GM12878 (cell line): ENCODE measurements at regions of chr9 and their contacts with region 1.

Region 1: DNA sequence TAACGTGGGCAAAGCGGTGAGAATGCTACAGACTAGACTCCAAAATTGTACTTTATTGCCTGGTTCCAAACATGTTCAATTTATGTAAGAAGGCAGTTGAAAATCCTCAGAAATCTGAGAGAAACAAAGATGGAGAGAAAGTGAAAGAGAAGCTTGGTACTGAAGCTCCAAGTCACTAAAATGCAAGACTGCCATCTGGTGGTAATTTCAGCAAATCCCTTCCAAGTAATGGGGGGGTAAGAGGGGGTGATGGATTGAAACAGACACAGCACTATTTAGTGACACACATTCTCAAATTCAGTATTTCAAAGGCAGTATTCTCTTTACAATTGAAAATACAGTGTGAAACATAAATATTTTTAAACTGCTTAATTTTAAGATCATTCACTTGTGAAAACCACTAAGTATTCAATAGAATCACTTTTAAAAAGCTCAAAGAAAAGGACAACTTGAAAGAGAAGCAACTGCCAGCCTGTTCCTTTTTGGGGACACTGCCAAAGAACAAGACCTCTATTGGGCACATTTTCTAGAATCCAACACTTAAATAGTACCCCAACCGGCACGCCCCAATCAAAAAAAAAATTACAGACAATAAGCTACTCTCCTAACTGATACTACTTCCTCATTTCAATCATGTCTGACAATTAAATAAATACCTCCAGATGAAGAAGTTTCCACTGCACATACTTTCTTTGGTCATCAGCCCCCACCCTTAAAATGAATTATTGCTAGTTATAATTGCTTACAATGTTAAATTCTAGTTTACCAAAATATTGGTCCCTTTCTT is 131.5 kb downstream of the AGTPBP1 start:
- DNase-seq: peak; percentile 44
- ATAC-seq: peak; percentile 99
- H3K4me3 ChIP-seq: no peak overlapping the region
- H3K27ac ChIP-seq: peak overlapping the region; percentile 48; the same call in 1 of the 2 replicates
- H3K4me1 ChIP-seq: peaks cover 4% of the 10 kb centered on the region; the same call in 1 of the 2 replicates
- H3K27me3 ChIP-seq: no peaks in the 10 kb centered on the region
- CTCF ChIP-seq: peak; percentile 68 to 88 (median 79); a peak in 5 of 6 replicates
- EP300 ChIP-seq: no peak
- POLR2A ChIP-seq: no peak
- RAD21 ChIP-seq: peak; percentile 87

Region 2: DNA sequence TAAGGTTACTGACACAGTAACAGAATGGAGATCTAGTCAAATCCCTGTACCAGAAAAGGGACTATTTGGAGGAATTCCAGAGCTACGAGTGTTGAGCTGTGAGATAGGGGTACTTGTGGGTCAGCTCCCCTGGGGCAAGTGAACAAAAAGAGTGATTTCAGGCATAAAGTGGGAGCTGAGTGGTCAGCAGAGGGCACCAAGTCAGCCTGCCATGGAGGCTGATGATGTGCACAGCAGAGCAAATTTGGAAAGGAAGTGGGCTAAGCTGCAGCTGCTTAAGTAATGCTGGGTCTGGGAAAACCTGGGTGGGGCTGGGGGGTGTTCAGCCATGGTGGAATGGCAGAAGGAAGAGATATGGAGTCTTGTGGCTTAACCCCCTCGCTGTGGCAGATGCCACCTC is 612.8 kb before region 1 on chr9:
- CTCF ChIA-PET with region 1: interaction called, 10 read pairs
- POLR2A ChIA-PET with region 1: no interaction called
- RAD21 ChIA-PET with region 1: interaction called, 4 read pairs
- SMC1A ChIA-PET with region 1: no interaction called
- in situ Hi-C with region 1: no loop called
- intact Hi-C with region 1: no loop called
- DNase-seq: no peak
- ATAC-seq: peak; percentile 49; the same call in 2 of the 3 replicates
- H3K4me3 ChIP-seq: no peak overlapping the region
- H3K27ac ChIP-seq: no peak overlapping the region
- H3K4me1 ChIP-seq: no peaks in the 10 kb centered on the region
- H3K27me3 ChIP-seq: no peaks in the 10 kb centered on the region; a peak in 1 of 4 replicates
- CTCF ChIP-seq: peak in 2 of 3 experiments; percentile 5 to 27; a peak in 3 of 6 replicates
- EP300 ChIP-seq: no peak
- POLR2A ChIP-seq: no peak
- RAD21 ChIP-seq: peak; percentile 41

Region 3: GRCh38 chr9:85258823-85259370 is 351.4 kb before region 1 on chr9:
- CTCF ChIA-PET with region 1: interaction called, 17 read pairs
- POLR2A ChIA-PET with region 1: no interaction called
- RAD21 ChIA-PET with region 1: interaction called, 9 read pairs
- SMC1A ChIA-PET with region 1: interaction called, 4 read pairs
- in situ Hi-C with region 1: no loop called
- intact Hi-C with region 1: loop called (anchors 5 kb)
- DNase-seq: peak; percentile 20
- ATAC-seq: peak; percentile 97
- H3K4me3 ChIP-seq: no peak overlapping the region
- H3K27ac ChIP-seq: no peak overlapping the region
- H3K4me1 ChIP-seq: no peaks in the 10 kb centered on the region
- H3K27me3 ChIP-seq: peaks cover 0 to 3% of the 10 kb centered on the region in 2 experiments; a peak in 1 of 4 replicates
- CTCF ChIP-seq: peak; percentile 69 to 82 (median 72)
- EP300 ChIP-seq: no peak
- POLR2A ChIP-seq: no peak
- RAD21 ChIP-seq: peak; percentile 75

Region 4: GRCh38 chr9:85577353-85577952 is 32.8 kb before region 1 on chr9:
- CTCF ChIA-PET with region 1: interaction called, 10 read pairs
- POLR2A ChIA-PET with region 1: no interaction called
- RAD21 ChIA-PET with region 1: no interaction called
- SMC1A ChIA-PET with region 1: interaction called, 7 read pairs
- in situ Hi-C with region 1: no loop called
- intact Hi-C with region 1: no loop called
- DNase-seq: no peak
- ATAC-seq: no peak
- H3K4me3 ChIP-seq: no peak overlapping the region
- H3K27ac ChIP-seq: no peak overlapping the region
- H3K4me1 ChIP-seq: no peaks in the 10 kb centered on the region
- H3K27me3 ChIP-seq: no peaks in the 10 kb centered on the region
- CTCF ChIP-seq: no peak
- EP300 ChIP-seq: no peak
- POLR2A ChIP-seq: no peak
- RAD21 ChIP-seq: no peak

Region 5: GRCh38 chr9:85594316-85594715 is 16.0 kb before region 1 on chr9:
- CTCF ChIA-PET with region 1: interaction called, 15 read pairs
- POLR2A ChIA-PET with region 1: no interaction called
- RAD21 ChIA-PET with region 1: interaction called, 5 read pairs
- SMC1A ChIA-PET with region 1: interaction called, 4 read pairs
- in situ Hi-C with region 1: no loop called
- intact Hi-C with region 1: no loop called
- DNase-seq: no peak
- ATAC-seq: no peak
- H3K4me3 ChIP-seq: no peak overlapping the region
- H3K27ac ChIP-seq: no peak overlapping the region
- H3K4me1 ChIP-seq: no peaks in the 10 kb centered on the region
- H3K27me3 ChIP-seq: no peaks in the 10 kb centered on the region
- CTCF ChIP-seq: no peak
- EP300 ChIP-seq: no peak
- POLR2A ChIP-seq: no peak
- RAD21 ChIP-seq: no peak

Region 6: GRCh38 chr9:85647571-85647970 is 37.3 kb after region 1 on chr9:
- CTCF ChIA-PET with region 1: interaction called, 10 read pairs
- POLR2A ChIA-PET with region 1: no interaction called
- RAD21 ChIA-PET with region 1: interaction called, 5 read pairs
- SMC1A ChIA-PET with region 1: interaction called, 6 read pairs
- in situ Hi-C with region 1: no loop called
- intact Hi-C with region 1: no loop called
- DNase-seq: peak; percentile 7
- ATAC-seq: peak; percentile 95
- H3K4me3 ChIP-seq: no peak overlapping the region
- H3K27ac ChIP-seq: 0 out of 2 replicates have a peak overlapping the region, but pooled peaks have one; percentile 39
- H3K4me1 ChIP-seq: peaks cover 9% of the 10 kb centered on the region
- H3K27me3 ChIP-seq: no peaks in the 10 kb centered on the region
- CTCF ChIP-seq: no peak
- EP300 ChIP-seq: peak in 1 of 2 experiments; percentile 51; a peak in 1 of 4 replicates
- POLR2A ChIP-seq: no peak
- RAD21 ChIP-seq: no peak